Left cardiac atrium (tissue), 4 donors: ENCODE measurements at regions of chr15 and their contacts with region 1.

Region 1: GRCh38 chr15:74428442-74428787 is 5.3 kb downstream of the SEMA7A start:
- DNase-seq: no peak
- ATAC-seq: no peak

Region 2: GRCh38 chr15:74392451-74392830 is 36.0 kb before region 1 on chr15:
- intact Hi-C with region 1: loop called in 1 of 2 experiments (anchors 5 kb)
- DNase-seq: no peak
- ATAC-seq: no peak

Region 3: DNA sequence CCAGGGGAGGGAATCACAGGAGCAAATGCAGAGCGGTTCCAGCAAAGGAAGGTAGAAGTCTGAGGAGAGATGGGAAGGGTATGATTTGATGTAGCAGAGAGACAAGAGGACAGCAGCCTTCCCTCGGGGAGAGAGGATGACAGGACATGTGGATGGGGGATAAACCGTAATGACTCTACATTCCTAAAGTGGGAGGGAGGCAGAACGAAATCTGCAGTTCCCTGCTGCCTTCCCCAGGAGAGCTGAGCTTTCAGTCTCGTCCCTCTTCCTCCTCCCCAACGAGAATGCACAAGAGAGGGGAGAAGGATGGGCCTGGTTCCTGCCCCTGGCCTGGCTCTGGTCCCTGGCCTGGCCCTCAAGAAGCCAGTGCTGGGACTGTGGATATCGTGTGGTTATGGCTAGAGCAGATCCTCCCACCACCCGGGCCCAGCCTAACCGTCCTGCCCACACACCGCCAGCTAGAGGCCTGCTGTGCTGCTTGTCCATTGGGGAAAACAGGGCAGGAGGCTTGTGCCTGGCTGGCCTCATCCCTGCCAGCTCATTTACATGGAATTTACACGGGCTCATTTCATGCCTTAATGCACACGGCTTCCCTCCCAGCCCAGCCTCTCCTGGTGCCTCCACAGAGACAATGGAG is 21.2 kb before region 1 on chr15:
- intact Hi-C with region 1: no loop called
- DNase-seq: no peak
- ATAC-seq: peak in 1 of 2 donors; percentile 86

Region 4: GRCh38 chr15:74460871-74461846 is 32.7 kb after region 1 on chr15 and contains the start of gene UBL7:
- intact Hi-C with region 1: no loop called
- DNase-seq: peak; percentile 98
- ATAC-seq: peak; percentile 99
- total RNA-seq, gene UBL7: 39.0 to 43.5 TPM

Region 5: GRCh38 chr15:74826364-74826819 is 398.0 kb after region 1 on chr15 and contains the start of gene CPLX3:
- intact Hi-C with region 1: no loop called
- DNase-seq: peak; percentile 45
- ATAC-seq: peak; percentile 31 to 50
- total RNA-seq, gene CPLX3: 11.0 to 24.5 TPM